ENCODE measurements at regions of chr20 and their contacts with region 1.

Region 1: DNA sequence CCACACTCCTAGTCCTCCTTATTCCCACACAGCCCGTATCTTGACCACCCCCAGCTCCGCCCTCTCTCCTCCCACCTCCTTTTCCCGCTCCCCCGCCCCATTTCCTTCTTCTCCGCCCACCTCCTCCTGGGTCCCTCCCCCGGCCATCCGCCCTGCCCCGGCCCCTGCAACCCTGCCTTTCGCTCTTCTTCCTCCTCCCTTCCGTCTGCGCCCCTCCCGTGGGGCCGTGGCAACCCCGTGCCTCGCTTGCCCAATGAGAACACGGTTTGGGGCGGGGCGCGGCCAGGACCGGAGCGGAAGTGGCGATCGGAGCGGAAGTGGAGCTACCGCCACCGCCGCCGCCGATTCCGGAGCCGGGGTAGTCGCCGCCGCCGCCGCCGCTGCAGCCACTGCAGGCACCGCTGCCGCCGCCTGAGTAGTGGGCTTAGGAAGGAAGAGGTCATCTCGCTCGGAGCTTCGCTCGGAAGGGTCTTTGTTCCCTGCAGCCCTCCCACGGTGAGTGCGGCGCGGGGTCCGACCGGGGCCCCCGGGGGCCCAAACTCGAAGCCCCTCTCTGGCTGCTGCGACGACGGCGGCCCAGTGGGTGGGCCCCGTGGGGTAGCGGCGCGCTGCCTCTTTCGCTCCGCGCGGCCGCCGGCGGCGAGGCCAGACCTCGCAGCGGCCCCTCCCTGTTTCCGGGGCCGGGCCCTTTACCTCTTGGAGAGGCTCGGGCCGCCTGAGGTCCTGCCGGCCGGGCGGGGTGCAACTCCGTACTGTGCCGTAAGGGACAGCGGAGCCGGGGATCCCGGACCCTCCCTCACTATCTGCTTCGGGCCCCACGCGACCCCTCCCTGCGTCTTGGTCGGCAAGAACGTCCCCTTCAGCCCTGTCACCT is at the start of gene YWHAB:
- DNase-seq: peak; percentile 99
- H3K4me3 ChIP-seq: peak within 1 kb of the TSS; percentile 92 to 99 (median 96)
- H3K27ac ChIP-seq: peak within 1 kb of the TSS; percentile 96 to 99 (median 98)
- H3K4me1 ChIP-seq: peaks cover 0 to 49% (median 42%) of the 10 kb centered on the region in 4 donors
- H3K27me3 ChIP-seq: no peaks in the 10 kb centered on the region
- CTCF ChIP-seq: peak in 1 of 4 experiments; percentile 26
- EP300 ChIP-seq: no peak
- POLR2A ChIP-seq: peak; percentile 69 to 80
- total RNA-seq, gene YWHAB: 80.3 to 110 (median 89.8) TPM

Region 2: GRCh38 chr20:44960103-44960852 is 74.6 kb after region 1 on chr20 and contains the start of gene TOMM34:
- intact Hi-C with region 1: loop called (anchors 5 kb)
- DNase-seq: peak; percentile 97
- H3K4me3 ChIP-seq: peak within 1 kb of the TSS; percentile 60 to 96 (median 80)
- H3K27ac ChIP-seq: peak within 1 kb of the TSS; percentile 80 to 90 (median 84)
- H3K4me1 ChIP-seq: peaks cover 0 to 24% (median 18%) of the 10 kb centered on the region in 4 donors
- H3K27me3 ChIP-seq: no peaks in the 10 kb centered on the region
- CTCF ChIP-seq: no peak
- EP300 ChIP-seq: no peak
- POLR2A ChIP-seq: peak; percentile 53 to 59
- total RNA-seq, gene TOMM34: 7.2 to 9.2 (median 8.3) TPM